Thyroid gland (tissue), 4 donors: ENCODE measurements at regions of chr10 and their contacts with region 1.

Region 1: GRCh38 chr10:102583435-102584417 is 60.6 kb upstream of the TRIM8 start:
- DNase-seq: peak; percentile 85 to 87
- H3K4me3 ChIP-seq: no peak overlapping the region
- H3K27ac ChIP-seq: no peak overlapping the region
- H3K4me1 ChIP-seq: peaks cover 0 to 11% of the 10 kb centered on the region in 2 donors
- H3K27me3 ChIP-seq: no peaks in the 10 kb centered on the region
- CTCF ChIP-seq: peak; percentile 68 to 89 (median 82)
- POLR2A ChIP-seq: no peak

Region 2: GRCh38 chr10:102394079-102394800 is 189.5 kb before region 1 on chr10:
- intact Hi-C with region 1: loop called (anchors 5 kb)
- DNase-seq: peak; percentile 95 to 96
- H3K4me3 ChIP-seq: peak overlapping the region; percentile 7 to 92 (median 69)
- H3K27ac ChIP-seq: peak overlapping the region; percentile 78 to 95 (median 87)
- H3K4me1 ChIP-seq: peaks cover 12 to 22% of the 10 kb centered on the region in 2 donors
- H3K27me3 ChIP-seq: no peaks in the 10 kb centered on the region
- CTCF ChIP-seq: peak in 5 of 6 experiments; percentile 76 to 96 (median 92)
- POLR2A ChIP-seq: peak in 1 of 2 donors; percentile 68

Region 3: DNA sequence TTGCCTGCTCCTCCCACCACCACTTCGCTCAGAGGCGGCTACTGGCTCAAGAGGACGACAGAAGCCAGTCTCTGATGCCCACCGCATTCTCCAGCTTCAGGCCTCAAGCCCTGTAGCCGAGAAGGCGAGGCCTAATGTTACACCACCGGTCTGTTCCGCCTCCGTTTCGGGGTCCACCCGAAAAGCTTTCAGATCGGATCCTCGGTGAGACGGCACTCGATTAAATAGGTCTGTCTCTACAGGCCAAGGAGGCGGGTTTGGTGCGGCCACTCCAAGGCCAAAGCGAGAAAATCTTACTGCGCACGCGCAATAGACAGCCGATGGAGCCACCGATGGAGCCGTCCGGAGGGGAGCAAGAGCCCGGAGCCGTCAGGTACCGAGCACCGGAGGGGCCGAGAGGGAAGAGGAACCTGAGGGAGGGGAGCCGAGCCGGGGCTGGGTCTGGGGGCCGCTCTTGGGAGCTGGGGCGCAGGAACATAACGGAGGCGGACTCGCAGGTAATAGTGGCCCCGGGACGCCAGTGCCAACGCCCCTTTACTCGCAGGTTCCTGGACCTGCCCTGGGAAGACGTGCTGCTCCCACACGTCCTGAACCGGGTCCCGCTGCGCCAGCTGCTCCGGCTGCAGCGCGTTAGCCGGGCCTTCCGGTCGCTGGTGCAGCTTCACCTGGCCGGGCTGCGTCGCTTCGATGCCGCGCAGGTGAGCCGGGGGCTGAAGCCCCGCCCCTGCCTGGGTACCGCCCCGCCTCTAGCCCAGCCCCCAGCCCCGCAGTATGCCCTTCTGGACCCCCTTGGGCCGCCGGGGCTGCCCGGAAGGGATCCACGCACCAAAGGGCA is 162.7 kb before region 1 on chr10 and contains the start of gene FBXL15:
- intact Hi-C with region 1: loop called (anchors 10 kb)
- DNase-seq: peak; percentile 98
- H3K4me3 ChIP-seq: peak within 1 kb of the TSS; percentile 3 to 91 (median 88)
- H3K27ac ChIP-seq: peak within 1 kb of the TSS; percentile 32 to 92 (median 87)
- H3K4me1 ChIP-seq: peaks cover 29 to 36% of the 10 kb centered on the region in 2 donors
- H3K27me3 ChIP-seq: no peaks in the 10 kb centered on the region
- CTCF ChIP-seq: peak in 1 of 6 experiments; percentile 35
- POLR2A ChIP-seq: peak in 1 of 2 donors; percentile 65
- total RNA-seq, gene FBXL15: 13.4 to 34.0 (median 27.2) TPM

Region 4: DNA sequence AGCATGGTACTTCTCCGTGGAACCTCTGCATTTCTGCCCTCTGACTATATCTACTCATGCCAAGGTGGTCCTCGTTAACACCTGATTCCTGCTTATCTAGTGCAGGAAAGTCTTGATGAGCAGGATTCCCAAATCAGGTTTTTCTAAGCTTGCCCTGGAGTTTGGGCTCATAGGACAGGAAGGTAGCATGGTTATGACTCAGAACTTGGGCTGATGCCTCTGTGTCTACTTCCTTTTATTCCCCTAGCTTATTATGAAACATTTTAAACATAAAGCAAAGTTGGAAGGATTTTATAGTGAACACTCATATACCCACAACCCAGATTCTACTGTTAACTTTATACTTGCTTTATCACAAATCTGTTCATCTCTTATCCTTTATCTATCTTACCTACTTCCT is 74.3 kb before region 1 on chr10:
- intact Hi-C with region 1: loop called (anchors 5 kb)
- DNase-seq: no peak
- H3K4me3 ChIP-seq: no peak overlapping the region
- H3K27ac ChIP-seq: peak overlapping the region in 1 of 3 donors; percentile 3
- H3K4me1 ChIP-seq: peaks cover 17 to 27% of the 10 kb centered on the region in 2 donors
- H3K27me3 ChIP-seq: no peaks in the 10 kb centered on the region
- CTCF ChIP-seq: no peak
- POLR2A ChIP-seq: no peak

Region 5: DNA sequence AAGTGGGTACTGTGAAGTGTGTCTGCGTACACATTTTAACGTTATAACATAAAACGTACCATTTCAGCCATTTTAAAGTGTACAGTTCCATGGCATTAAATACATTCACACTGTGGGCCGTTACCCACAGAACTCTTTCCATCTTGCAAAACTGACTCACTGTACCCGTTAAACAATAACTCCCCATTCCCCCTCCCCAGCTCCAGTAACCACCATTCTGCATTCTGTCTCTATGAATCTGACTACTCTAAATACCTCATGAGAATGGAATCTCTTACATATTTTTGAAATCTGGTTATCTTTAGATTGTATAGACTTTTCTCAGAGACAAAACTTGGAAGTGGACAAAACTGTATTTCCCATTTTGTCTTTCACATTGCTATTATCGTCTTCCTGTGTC is 121.2 kb after region 1 on chr10:
- intact Hi-C with region 1: no loop called
- DNase-seq: no peak
- H3K4me3 ChIP-seq: no peak overlapping the region
- H3K27ac ChIP-seq: no peak overlapping the region
- H3K4me1 ChIP-seq: peaks cover 0 to 5% of the 10 kb centered on the region in 2 donors
- H3K27me3 ChIP-seq: no peaks in the 10 kb centered on the region
- CTCF ChIP-seq: no peak
- POLR2A ChIP-seq: no peak